OCI-LY7 (cell line): ENCODE measurements at regions of chr2 and their contacts with region 1.

Region 1: GRCh38 chr2:155054712-155055111 is 356.2 kb downstream of the KCNJ3 start:
- DNase-seq: no peak
- H3K4me3 ChIP-seq: no peak overlapping the region
- H3K27ac ChIP-seq: no peak overlapping the region
- H3K4me1 ChIP-seq: no peaks in the 10 kb centered on the region
- CTCF ChIP-seq: no peak

Region 2: DNA sequence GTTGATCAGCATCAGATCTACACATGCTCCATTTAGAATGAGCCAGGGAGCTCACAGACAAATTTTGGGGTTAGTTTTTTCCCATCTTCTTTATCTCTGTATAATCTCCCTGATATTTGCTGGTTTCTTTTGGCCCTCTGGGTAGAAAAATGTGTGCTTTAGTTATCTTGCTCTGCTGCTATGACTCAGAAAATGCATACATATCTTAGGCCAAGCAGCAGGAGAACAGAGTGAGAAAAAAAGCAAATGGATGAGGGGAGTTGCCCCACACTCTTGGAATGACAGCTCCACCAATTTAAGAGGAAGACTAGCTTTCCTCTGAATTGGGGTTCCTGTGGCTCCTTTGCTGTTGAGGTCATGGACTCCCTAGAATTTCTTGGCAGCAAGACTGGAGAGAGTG is 24.4 kb before region 1 on chr2:
- CTCF ChIA-PET with region 1: no interaction called
- POLR2A ChIA-PET with region 1: no interaction called
- intact Hi-C with region 1: loop called (anchors 1 kb)
- DNase-seq: no peak
- H3K4me3 ChIP-seq: no peak overlapping the region
- H3K27ac ChIP-seq: no peak overlapping the region
- H3K4me1 ChIP-seq: no peaks in the 10 kb centered on the region
- CTCF ChIP-seq: no peak